HEK293 (cell line): ENCODE measurements at regions of chr19 and their contacts with region 1.

Region 1: GRCh38 chr19:33104520-33104919 is 23.5 kb downstream of the GPATCH1 start:
- H3K4me3 ChIP-seq: no peak overlapping the region
- H3K27ac ChIP-seq: no peak overlapping the region
- H3K4me1 ChIP-seq: no peaks in the 10 kb centered on the region
- CTCF ChIP-seq: no peak

Region 2: DNA sequence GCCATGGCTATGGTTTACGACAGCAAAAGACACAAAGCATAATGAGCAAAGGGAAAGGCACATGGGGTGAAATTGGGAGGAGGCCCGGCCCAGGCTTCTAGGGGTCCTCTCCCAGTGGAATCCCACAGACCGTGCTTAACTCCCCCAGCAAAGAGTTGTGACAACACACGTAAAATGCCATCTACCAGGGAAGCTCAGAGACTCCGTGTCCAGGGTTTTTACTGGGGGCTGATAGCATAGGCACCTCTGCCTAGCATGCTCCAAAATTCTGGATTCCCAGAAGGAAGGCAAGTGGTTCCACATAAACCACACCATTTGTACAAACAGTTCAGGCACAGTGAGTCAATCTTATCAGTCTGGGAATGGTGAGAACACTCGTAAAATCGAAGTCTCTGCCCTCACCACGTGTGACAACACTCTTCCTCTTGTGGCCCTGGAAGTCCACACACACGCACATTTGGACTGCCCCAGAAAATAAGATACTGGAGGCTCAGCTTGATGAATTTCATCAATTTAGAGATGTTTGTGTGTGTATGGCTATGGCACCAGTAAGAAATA is 74.7 kb before region 1 on chr19:
- CTCF ChIA-PET with region 1: no interaction called
- POLR2A ChIA-PET with region 1: no interaction called
- H3K4me3 ChIP-seq: no peak overlapping the region
- H3K27ac ChIP-seq: no peak overlapping the region
- H3K4me1 ChIP-seq: peaks cover 10% of the 10 kb centered on the region
- CTCF ChIP-seq: no peak

Region 3: GRCh38 chr19:33118643-33119042 is 14.1 kb after region 1 on chr19:
- CTCF ChIA-PET with region 1: interaction called, 32 read pairs
- POLR2A ChIA-PET with region 1: no interaction called
- H3K4me3 ChIP-seq: no peak overlapping the region
- H3K27ac ChIP-seq: no peak overlapping the region
- H3K4me1 ChIP-seq: no peaks in the 10 kb centered on the region
- CTCF ChIP-seq: no peak

Region 4: DNA sequence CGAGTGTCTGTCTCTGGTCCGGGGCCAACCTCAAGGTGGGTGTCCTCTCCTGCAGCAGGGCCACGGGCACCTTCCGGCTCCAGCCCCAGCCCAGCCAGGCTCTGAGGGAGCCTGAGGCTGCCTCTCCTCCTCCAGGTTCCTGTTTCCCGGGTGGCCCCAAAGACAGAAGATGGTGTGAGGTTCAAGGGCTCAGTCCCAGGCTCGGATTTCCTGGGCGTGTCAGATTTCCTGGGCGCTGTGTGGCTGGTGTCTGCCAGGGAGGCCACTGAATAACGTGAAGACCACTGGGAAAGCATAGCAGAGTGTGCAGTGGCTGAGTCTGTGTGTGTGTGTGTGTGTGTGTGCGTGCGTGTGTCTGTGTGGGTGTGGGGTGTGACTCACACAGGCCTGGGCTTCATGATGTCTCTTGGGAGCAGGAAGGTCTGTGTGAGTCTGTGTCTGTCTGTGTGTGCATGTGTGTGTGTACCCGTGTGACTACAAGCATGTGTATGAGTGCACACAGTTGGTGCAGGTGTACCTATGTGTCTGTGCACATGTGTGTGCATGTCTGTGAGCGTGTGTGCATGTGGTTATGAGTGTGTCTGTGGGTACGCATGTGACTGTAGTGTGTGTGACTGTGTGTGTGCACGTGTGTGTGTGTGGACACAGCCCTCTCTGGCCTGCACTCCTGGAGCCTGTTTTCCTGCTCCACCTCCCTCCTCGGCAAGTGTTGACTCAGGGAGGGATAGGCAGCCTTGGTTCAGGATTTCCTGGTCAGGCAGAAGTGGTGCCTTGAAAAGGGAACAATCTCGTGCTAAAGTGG is 169.6 kb after region 1 on chr19:
- CTCF ChIA-PET with region 1: no interaction called
- POLR2A ChIA-PET with region 1: no interaction called
- H3K4me3 ChIP-seq: no peak overlapping the region
- H3K27ac ChIP-seq: peak overlapping the region; percentile 17; the same call in 1 of the 2 replicates
- H3K4me1 ChIP-seq: peaks cover 14% of the 10 kb centered on the region
- CTCF ChIP-seq: no peak

Region 5: DNA sequence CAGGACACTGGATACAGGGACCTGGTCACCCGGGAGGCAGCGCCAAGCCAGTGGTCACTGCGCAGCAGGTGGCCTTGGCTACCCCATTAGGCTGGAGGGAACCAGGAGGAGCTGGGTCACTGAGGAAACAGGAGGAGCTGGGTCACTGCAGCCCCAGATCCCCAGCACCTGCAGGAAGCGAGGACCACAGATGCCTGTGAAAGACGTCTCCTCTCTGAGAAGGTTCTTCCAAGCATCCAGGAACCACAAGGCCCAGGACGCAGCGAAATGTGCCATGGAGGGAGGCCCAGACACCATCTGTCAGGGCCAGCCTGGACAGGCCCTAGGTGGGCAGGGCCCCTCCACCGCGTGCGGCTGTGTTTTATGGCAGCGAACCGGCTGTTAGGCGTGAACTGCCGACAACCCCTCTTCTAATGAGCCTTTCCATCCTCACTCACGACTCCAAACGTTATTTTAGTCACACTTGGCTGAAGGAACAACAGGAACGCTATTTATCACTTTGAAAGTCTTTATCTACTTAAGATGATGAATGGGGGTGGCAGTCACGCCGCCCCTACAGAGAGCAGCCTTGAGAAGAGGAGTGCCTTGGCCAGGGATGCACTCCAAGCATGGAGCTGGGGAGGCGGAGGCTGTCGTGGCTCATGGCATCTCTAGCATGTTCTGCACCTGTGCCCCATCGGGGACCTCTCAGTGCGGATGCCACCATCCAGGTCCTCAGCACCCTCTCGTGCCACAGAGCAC is 322.3 kb after region 1 on chr19:
- CTCF ChIA-PET with region 1: no interaction called
- POLR2A ChIA-PET with region 1: no interaction called
- H3K4me3 ChIP-seq: no peak overlapping the region
- H3K27ac ChIP-seq: no peak overlapping the region
- H3K4me1 ChIP-seq: peaks cover 5% of the 10 kb centered on the region
- CTCF ChIP-seq: no peak